Heart right ventricle (tissue), 16 donors: ENCODE measurements at regions of chr15 and their contacts with region 1.

Region 1: DNA sequence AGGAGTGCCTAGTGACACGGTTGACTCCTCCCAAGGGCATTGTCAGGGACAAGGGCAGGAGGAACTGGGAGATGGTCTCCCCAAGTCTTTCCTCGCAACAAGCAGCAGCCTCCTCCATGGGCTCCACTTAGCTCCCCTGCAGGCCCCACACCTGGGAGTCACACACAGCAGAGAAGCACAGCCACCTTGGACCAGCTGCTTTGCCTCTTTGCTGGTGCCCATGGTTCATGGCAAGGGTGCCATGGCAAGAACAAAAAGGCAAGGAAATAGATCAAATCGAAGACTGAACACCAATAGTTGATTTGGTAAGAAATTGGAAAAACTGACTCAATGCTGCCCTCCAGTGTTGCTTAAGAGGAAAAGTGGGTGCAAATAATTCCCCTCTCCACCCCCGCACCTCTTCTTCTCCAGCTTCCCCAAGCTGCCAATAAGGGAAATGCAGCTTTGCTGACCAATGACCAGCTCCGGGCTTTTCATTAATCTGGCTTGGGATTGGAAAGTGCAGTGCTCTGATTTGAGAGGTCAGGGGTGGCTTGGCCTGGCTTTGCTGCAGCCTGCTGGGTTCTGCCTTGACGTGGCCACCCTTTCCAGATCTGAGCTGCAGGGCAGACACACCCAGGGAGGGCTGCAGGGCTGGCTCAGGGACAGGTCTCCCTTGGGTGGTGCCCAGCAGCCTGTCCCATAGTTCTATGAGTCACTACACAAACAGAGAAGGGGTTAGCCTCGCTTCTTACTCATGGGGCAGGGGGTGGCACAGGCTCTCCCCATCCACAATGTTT is 162.0 kb downstream of the KLF13 start:
- DNase-seq: peak; percentile 46 to 68
- ATAC-seq: peak; percentile 70 to 89 (median 80)
- H3K4me3 ChIP-seq: no peak overlapping the region
- H3K27ac ChIP-seq: peak overlapping the region in 4 of 10 donors; percentile 0 to 23 (median 14)
- H3K4me1 ChIP-seq: peaks cover 0 to 26% (median 18%) of the 10 kb centered on the region in 9 donors
- H3K27me3 ChIP-seq: peaks cover 0 to 13% (median 5%) of the 10 kb centered on the region in 7 donors
- CTCF ChIP-seq: peak; percentile 79 to 98 (median 87)

Region 2: GRCh38 chr15:30670056-30670455 is 818.6 kb before region 1 on chr15:
- intact Hi-C with region 1: loop called in 2 of 10 experiments (anchors 10 kb)
- DNase-seq: no peak
- ATAC-seq: no peak
- H3K4me3 ChIP-seq: no peak overlapping the region
- H3K27ac ChIP-seq: no peak overlapping the region
- H3K4me1 ChIP-seq: no peaks in the 10 kb centered on the region
- H3K27me3 ChIP-seq: no peaks in the 10 kb centered on the region
- CTCF ChIP-seq: no peak

Region 3: GRCh38 chr15:31311735-31312619 is 176.6 kb before region 1 on chr15:
- intact Hi-C with region 1: loop called in 1 of 10 experiments (anchors 10 kb)
- DNase-seq: peak in 1 of 2 donors; percentile 2
- ATAC-seq: no peak
- H3K4me3 ChIP-seq: no peak overlapping the region
- H3K27ac ChIP-seq: no peak overlapping the region
- H3K4me1 ChIP-seq: peaks cover 0 to 13% (median 7%) of the 10 kb centered on the region in 9 donors
- H3K27me3 ChIP-seq: peaks cover 0 to 6% (median 0%) of the 10 kb centered on the region in 7 donors
- CTCF ChIP-seq: no peak

Region 4: GRCh38 chr15:31352911-31353811 is 135.5 kb before region 1 on chr15:
- intact Hi-C with region 1: loop called in 1 of 10 experiments (anchors 10 kb)
- DNase-seq: peak; percentile 77 to 91
- ATAC-seq: peak; percentile 84 to 95 (median 91)
- H3K4me3 ChIP-seq: peak overlapping the region in 9 of 10 donors; percentile 9 to 41 (median 36)
- H3K27ac ChIP-seq: peak overlapping the region; percentile 83 to 98 (median 94)
- H3K4me1 ChIP-seq: peaks cover 55 to 100% (median 100%) of the 10 kb centered on the region in 9 donors
- H3K27me3 ChIP-seq: no peaks in the 10 kb centered on the region
- CTCF ChIP-seq: peak in 1 of 9 donors; percentile 30

Region 5: DNA sequence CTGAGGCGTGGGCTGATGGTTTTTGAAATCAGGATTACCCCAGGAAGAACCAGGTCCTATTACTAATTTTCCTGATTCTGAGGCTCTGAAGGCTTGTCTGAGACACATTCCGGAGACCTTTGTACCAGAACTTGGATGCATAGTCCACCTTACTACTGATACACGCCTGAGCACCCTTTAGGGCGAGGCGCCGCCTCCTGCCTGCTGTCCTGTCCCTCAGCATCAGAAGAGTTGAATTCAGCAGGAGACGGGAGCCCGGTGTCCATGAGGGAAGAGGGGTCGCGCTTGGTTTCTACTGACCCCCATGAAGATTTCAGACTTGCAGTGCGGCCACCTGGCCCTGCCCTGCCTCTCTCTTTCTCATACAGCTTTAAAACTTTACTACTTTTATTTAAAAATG is 112.1 kb before region 1 on chr15:
- intact Hi-C with region 1: no loop called
- DNase-seq: no peak
- ATAC-seq: no peak
- H3K4me3 ChIP-seq: no peak overlapping the region
- H3K27ac ChIP-seq: peak overlapping the region in 1 of 10 donors; percentile 21
- H3K4me1 ChIP-seq: peaks cover 23 to 93% (median 78%) of the 10 kb centered on the region in 9 donors
- H3K27me3 ChIP-seq: no peaks in the 10 kb centered on the region
- CTCF ChIP-seq: no peak

Region 6: DNA sequence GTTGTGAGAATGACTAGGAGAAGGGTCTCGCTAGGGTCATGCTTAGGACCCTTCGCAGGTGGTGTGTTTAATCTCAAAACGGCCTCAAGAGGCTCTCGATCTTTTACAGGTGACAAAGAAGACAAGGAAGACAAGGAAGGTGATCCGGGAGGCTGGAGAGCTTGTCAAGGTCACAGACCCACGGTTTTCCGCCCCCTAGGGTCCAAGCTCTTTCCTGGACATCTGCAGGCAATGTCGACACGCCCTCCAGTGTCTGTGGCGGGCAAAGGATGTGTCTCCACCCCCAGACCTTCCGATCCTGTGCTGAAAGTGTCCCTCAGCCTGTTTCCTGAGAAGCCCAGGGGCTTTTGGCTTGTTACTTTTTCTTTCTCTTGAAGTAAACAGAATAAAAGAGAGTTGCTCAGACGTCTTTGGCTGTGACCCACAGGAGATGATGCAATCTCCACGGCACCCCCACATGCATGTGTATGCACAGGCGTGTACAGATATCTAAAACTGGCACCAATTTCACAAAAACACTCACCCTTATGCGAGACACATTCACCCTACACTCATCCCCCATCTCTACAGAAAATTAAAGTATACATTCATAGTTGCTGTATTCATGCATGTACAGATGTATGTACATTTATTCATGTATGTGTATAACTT is 53.2 kb before region 1 on chr15:
- intact Hi-C with region 1: loop called in 8 of 10 experiments (anchors 2 to 10 kb)
- DNase-seq: peak; percentile 82 to 87
- ATAC-seq: peak; percentile 82 to 93 (median 89)
- H3K4me3 ChIP-seq: peak overlapping the region in 7 of 10 donors; percentile 3 to 47 (median 23)
- H3K27ac ChIP-seq: peak overlapping the region; percentile 12 to 83 (median 72)
- H3K4me1 ChIP-seq: peaks cover 2 to 50% (median 26%) of the 10 kb centered on the region in 9 donors
- H3K27me3 ChIP-seq: no peaks in the 10 kb centered on the region
- CTCF ChIP-seq: peak; percentile 56 to 94 (median 85)

Region 7: GRCh38 chr15:31660816-31661215 is 172.2 kb after region 1 on chr15:
- intact Hi-C with region 1: no loop called
- DNase-seq: no peak
- ATAC-seq: no peak
- H3K4me3 ChIP-seq: no peak overlapping the region
- H3K27ac ChIP-seq: no peak overlapping the region
- H3K4me1 ChIP-seq: no peaks in the 10 kb centered on the region
- H3K27me3 ChIP-seq: no peaks in the 10 kb centered on the region
- CTCF ChIP-seq: no peak

Region 8: GRCh38 chr15:31870328-31871165 is 381.9 kb after region 1 on chr15:
- intact Hi-C with region 1: loop called in 1 of 10 experiments (anchors 5 kb)
- DNase-seq: peak; percentile 84 to 90
- ATAC-seq: peak; percentile 96 to 99 (median 97)
- H3K4me3 ChIP-seq: peak within 1 kb of the TSS in 9 of 10 donors; percentile 51 to 69 (median 66)
- H3K27ac ChIP-seq: peak within 1 kb of the TSS in 9 of 10 donors; percentile 2 to 80 (median 75)
- H3K4me1 ChIP-seq: peaks cover 0 to 28% (median 5%) of the 10 kb centered on the region in 9 donors
- H3K27me3 ChIP-seq: peaks cover 0 to 13% (median 0%) of the 10 kb centered on the region in 7 donors
- CTCF ChIP-seq: no peak